ENCODE measurements at regions of chr13 and their contacts with region 1.

Region 1: GRCh38 chr13:41222259-41222852 is 28.0 kb upstream of the KBTBD7 start:
- DNase-seq: peak; percentile 75
- H3K4me3 ChIP-seq: no peak overlapping the region
- H3K27ac ChIP-seq: no peak overlapping the region
- H3K4me1 ChIP-seq: peaks cover 19% of the 10 kb centered on the region
- H3K27me3 ChIP-seq: no peaks in the 10 kb centered on the region
- CTCF ChIP-seq: peak; percentile 81

Region 2: GRCh38 chr13:41061075-41061913 is 161.1 kb before region 1 on chr13 and contains the start of gene WBP4:
- CTCF ChIA-PET with region 1: no interaction called
- dilution Hi-C with region 1: no loop called
- in situ Hi-C with region 1: no loop called
- intact Hi-C with region 1: no loop called
- DNase-seq: peak; percentile 97
- H3K4me3 ChIP-seq: peak within 1 kb of the TSS; percentile 86 to 97 (median 87)
- H3K27ac ChIP-seq: peak within 1 kb of the TSS; percentile 99
- H3K4me1 ChIP-seq: peaks cover 25% of the 10 kb centered on the region
- H3K27me3 ChIP-seq: no peaks in the 10 kb centered on the region
- CTCF ChIP-seq: peak in 1 of 2 donors; percentile 27
- total RNA-seq, gene WBP4: 5.0 to 12.4 TPM

Region 3: DNA sequence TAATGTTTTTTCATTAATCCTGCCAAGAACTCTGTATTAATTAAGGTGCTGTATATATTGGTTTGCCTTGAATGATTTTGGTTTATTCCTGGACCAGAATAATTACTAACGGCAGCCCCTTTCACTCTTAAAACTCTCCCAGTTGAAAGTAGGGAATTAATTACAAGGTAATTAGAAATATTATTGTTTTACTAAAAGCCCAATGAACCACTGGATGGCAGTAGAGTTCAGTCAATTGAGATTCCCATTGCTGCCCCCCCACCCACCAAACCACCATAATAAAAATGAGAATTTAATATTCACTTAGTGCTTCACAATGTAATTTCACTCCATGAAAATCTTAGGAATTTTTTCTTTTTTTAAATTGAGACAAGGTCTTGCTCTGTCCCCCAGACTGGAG is 147.3 kb before region 1 on chr13:
- CTCF ChIA-PET with region 1: no interaction called
- dilution Hi-C with region 1: no loop called
- in situ Hi-C with region 1: loop called in 1 of 2 experiments (anchors 10 kb)
- intact Hi-C with region 1: loop called (anchors 1 kb)
- DNase-seq: no peak
- H3K4me3 ChIP-seq: no peak overlapping the region
- H3K27ac ChIP-seq: no peak overlapping the region
- H3K4me1 ChIP-seq: no peaks in the 10 kb centered on the region
- H3K27me3 ChIP-seq: no peaks in the 10 kb centered on the region
- CTCF ChIP-seq: peak; percentile 38 to 52

Region 4: GRCh38 chr13:41132512-41133152 is 89.7 kb before region 1 on chr13 and contains the start of gene KBTBD6:
- CTCF ChIA-PET with region 1: interaction called, 5 read pairs
- dilution Hi-C with region 1: no loop called
- in situ Hi-C with region 1: no loop called
- intact Hi-C with region 1: loop called (anchors 1 kb)
- DNase-seq: peak; percentile 100
- H3K4me3 ChIP-seq: peak within 1 kb of the TSS; percentile 76 to 93 (median 77)
- H3K27ac ChIP-seq: peak within 1 kb of the TSS; percentile 97
- H3K4me1 ChIP-seq: peaks cover 23% of the 10 kb centered on the region
- H3K27me3 ChIP-seq: no peaks in the 10 kb centered on the region
- CTCF ChIP-seq: no peak
- total RNA-seq, gene KBTBD6: 8.2 to 11.2 TPM

Region 5: DNA sequence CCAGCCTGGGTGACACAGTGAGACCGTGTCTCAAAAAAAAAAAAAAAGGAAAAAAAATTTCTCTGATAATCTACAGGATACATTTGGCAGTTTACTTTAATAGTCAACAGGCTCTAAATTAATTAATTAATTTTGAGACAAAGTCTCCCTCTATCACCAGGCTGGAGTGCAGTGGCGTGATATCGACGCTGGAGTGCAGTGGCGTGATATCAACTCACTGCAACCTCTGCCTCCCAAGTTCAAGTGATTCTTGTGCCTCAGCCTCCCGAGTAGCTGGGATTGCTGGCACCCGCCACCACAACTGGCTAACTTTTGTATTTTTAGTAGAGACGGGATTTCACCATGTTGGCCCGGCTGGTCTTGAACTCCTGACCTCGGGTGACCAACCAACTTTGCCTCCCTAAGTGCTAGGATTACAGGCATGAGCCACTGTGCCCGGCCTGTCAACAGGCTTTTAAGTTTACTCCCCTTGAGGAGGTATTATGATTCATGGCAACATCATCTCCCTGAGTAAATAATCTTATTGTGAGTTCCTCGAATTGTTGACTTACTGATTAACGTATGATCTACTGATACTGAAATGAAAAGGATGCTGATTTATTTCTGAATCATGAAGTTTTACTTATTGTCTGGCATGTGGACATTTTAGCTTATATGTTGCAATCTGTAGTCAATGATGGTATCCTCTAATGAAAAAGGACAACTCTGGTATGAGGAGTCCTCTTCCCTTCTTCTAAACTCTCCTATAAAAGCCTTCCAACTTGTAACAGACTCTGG is 62.3 kb after region 1 on chr13:
- CTCF ChIA-PET with region 1: no interaction called
- dilution Hi-C with region 1: no loop called
- in situ Hi-C with region 1: no loop called
- intact Hi-C with region 1: loop called (anchors 1 kb)
- DNase-seq: peak; percentile 96
- H3K4me3 ChIP-seq: no peak overlapping the region
- H3K27ac ChIP-seq: peak overlapping the region; percentile 81
- H3K4me1 ChIP-seq: peaks cover 12% of the 10 kb centered on the region
- H3K27me3 ChIP-seq: no peaks in the 10 kb centered on the region
- CTCF ChIP-seq: no peak

Region 6: GRCh38 chr13:41310963-41311606 is 88.7 kb after region 1 on chr13 and contains the start of gene NAA16:
- CTCF ChIA-PET with region 1: no interaction called
- dilution Hi-C with region 1: no loop called
- in situ Hi-C with region 1: no loop called
- intact Hi-C with region 1: loop called (anchors 2 kb)
- DNase-seq: peak; percentile 86
- H3K4me3 ChIP-seq: peak within 1 kb of the TSS; percentile 66 to 100 (median 94)
- H3K27ac ChIP-seq: peak within 1 kb of the TSS; percentile 86
- H3K4me1 ChIP-seq: peaks cover 24% of the 10 kb centered on the region
- H3K27me3 ChIP-seq: no peaks in the 10 kb centered on the region
- CTCF ChIP-seq: no peak
- total RNA-seq, gene NAA16: 8.7 to 17.8 TPM

Region 7: DNA sequence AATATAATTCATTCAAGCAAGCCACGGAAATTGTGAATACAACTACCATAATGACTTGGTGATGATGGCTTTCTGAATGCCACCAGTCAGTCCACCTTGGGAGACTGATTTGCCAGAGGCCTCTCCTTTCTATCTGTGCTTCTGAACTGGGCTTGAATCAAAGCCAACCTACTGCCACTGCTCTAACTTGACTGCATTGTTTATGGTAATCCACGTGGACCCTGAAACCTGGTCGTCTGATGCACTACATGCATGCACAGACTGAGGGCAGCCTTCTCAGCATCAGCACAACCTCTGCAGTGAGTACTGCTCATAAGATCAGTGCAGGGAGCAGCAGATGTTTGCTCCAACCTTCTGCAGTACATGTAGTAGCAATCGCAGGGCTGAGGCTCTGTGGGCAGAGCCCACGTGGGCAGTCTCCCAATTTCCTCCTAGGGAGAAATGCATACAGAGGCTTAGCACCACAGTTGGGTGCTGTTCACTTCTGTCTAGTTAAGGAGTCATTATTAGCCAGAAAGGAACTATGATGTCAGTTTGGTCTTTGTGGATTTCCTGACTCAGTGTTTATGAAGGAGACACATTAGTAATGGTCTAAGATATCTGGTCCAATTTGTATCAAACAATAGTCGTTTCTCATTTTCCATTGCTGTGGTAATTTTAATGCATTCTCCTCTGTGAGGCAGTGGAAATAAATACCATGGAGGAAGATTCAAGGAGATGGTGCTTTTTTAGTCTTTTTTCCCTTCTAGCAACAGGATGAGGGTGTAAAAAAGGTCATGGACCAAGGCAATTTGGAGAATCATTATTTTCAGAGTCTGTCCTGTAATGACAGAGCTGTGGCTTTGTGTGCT is 1132.1 kb after region 1 on chr13:
- CTCF ChIA-PET with region 1: interaction called, 16 read pairs
- dilution Hi-C with region 1: no loop called
- in situ Hi-C with region 1: no loop called
- intact Hi-C with region 1: no loop called
- DNase-seq: peak; percentile 74
- H3K4me3 ChIP-seq: no peak overlapping the region
- H3K27ac ChIP-seq: no peak overlapping the region
- H3K4me1 ChIP-seq: no peaks in the 10 kb centered on the region
- H3K27me3 ChIP-seq: no peaks in the 10 kb centered on the region
- CTCF ChIP-seq: no peak

Measured in mammary epithelial cell (primary cell).